Cardiac septum (tissue), 1 donor: ENCODE measurements at regions of chr11 and their contacts with region 1.

Region 1: GRCh38 chr11:119101759-119102423 is at the start of gene DPAGT1:
- DNase-seq: peak; percentile 94
- total RNA-seq, gene DPAGT1: 18.9 TPM

Region 2: GRCh38 chr11:118998822-118999221 is 103.1 kb before region 1 on chr11:
- intact Hi-C with region 1: no loop called
- DNase-seq: no peak

Region 3: DNA sequence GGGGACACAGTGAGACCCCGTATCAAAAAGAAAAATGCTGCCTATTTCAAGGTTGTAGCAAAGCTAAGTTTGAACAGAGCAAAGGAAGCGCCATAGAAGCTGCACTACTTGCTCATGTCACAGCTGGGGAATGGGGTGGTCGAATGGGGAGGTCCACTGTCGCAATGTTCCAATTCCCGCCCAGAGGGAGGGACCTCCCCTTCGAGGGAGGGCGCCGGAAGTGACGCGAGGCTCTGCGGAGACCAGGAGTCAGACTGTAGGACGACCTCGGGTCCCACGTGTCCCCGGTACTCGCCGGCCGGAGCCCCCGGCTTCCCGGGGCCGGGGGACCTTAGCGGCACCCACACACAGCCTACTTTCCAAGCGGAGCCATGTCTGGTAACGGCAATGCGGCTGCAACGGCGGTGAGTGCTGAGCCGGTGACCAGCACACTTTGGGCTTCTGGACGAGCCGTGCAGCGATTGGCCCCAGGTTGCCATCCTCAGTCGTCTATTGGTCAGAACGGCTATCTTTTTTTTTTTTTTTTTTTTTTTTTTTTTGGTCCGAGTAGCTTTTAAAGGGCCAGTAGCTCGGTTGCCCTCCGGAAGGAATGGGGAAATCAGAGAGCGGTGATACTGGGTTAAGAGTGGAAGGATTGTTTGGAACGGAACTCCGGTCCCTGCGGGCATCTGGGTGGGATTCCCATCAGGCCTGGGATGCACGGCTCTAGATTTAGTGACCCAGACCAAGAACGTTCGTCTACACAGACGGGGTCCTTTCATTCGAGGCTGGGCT is 17.0 kb before region 1 on chr11 and contains the start of gene HMBS:
- intact Hi-C with region 1: loop called (anchors 2 kb)
- DNase-seq: peak; percentile 96
- total RNA-seq, gene HMBS: 14.7 TPM

Region 4: DNA sequence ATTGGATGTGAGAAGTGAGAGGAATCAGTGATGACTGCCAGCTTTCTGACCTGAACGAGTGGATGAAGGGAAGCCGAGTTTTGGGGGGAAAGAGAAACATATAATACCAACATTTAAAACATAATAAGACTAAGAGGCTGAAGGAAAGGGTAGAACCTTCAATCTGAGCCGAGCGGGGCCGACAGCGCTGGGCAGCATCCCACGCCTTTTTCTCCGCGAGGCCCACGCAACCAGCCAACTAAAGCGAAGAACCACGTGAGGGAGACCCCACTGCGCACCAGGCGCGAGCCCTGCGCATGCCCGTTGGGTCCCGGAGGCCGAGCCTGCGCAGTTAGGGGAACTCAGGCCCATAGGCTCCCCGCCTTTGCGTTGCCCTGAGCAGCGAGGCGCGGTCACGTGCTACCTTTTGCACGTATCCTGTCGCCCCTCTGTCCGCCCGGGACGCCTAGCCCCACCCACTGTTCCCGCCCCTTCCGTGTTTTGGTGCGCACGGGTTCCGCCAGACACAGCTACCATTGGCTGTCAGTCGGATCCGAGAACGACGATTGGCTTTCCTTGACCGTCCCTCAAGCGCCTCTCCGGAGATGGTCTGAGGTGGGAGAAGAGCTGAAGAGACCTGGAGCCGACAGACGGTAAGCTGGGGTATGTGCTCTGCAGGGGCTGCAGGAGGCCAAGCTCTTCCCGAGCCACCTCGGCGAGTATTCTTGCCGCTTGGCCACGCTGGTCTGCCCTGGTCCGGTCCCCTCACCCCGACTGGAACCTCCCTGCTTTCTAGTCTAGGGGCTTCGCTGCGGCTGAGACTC is 19.3 kb after region 1 on chr11 and contains the start of gene HINFP:
- intact Hi-C with region 1: loop called (anchors 2 kb)
- DNase-seq: peak; percentile 100
- total RNA-seq, gene HINFP: 14.5 TPM

Region 5: GRCh38 chr11:119218141-119218878 is 116.4 kb after region 1 on chr11:
- intact Hi-C with region 1: no loop called
- DNase-seq: no peak